ENCODE measurements at regions of chr4 and their contacts with region 1.

Region 1: GRCh38 chr4:4502694-4503311 is 39.0 kb downstream of the STX18 start:
- DNase-seq: peak; percentile 23
- H3K4me3 Mint-ChIP-seq: peak overlapping the region; percentile 68
- H3K27ac Mint-ChIP-seq: peak overlapping the region; percentile 73
- H3K4me1 Mint-ChIP-seq: peaks cover 17% of the 10 kb centered on the region
- H3K27me3 Mint-ChIP-seq: no peaks in the 10 kb centered on the region

Region 2: DNA sequence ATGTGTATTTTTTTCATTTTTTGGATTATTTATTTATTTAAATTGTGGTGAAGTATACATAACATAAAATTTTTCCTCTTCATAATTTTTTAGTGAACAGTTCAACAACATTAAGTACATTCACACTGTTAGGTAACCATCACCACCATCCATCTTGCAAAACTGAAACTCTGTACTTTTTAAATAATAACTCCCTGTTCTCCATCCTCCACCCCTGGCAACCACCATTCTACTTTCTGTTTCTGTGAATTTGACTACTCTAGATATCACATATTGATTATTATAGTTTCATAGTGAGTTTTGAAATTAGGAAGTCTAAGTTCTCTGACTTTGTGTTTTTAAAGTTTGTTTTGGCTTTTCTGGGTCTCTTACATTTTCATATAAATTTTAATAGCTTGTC is 128.3 kb after region 1 on chr4:
- intact Hi-C with region 1: loop called (anchors 5 kb)
- DNase-seq: no peak
- H3K4me3 Mint-ChIP-seq: no peak overlapping the region
- H3K27ac Mint-ChIP-seq: no peak overlapping the region
- H3K4me1 Mint-ChIP-seq: peaks cover 12% of the 10 kb centered on the region
- H3K27me3 Mint-ChIP-seq: no peaks in the 10 kb centered on the region